ENCODE measurements at regions of chr1 and their contacts with region 1.

Region 1: DNA sequence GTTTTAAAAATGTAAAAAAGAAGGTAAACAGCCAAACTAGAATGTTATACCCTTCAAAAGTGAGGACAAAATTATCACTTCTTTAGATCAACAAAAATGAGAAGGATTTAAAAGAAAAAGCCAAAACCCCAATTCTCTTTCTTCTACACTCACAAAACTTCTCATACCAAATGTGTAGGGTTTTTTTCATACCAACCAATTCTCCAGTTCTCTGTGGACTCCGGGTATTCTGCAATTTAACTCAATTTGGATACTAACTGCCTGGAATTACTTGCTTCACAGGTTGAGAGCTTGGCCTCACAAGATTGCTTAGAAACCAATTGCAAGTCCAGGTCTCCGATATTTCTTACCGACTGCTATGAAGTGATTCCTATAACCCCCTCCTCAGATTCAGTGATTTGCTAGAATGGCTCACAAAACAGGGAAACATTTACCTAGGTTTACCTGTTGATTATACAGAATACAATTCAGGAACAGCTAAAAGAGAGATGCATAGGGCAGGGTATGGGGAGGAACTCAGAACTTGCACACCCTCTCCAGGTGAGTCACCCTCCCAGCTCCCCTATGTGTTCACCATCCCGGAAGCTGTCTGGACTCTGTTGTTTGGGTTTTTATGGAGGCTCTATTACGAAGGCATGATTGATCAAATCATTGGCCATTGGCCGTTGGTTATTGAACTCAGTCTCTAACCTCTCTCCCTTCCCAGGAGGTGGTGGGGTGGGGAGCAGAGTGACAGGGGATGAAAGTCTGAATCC is 67.1 kb downstream of the CAMTA1 start:
- DNase-seq: no peak
- ATAC-seq: no peak
- H3K4me3 ChIP-seq: no peak overlapping the region
- H3K4me3 Mint-ChIP-seq: no peak overlapping the region
- H3K27ac ChIP-seq: no peak overlapping the region
- H3K27ac Mint-ChIP-seq: no peak overlapping the region
- H3K4me1 ChIP-seq: no peaks in the 10 kb centered on the region
- H3K4me1 Mint-ChIP-seq: peaks cover 7 to 30% (median 12%) of the 10 kb centered on the region in 3 donors
- H3K27me3 ChIP-seq: no peaks in the 10 kb centered on the region
- H3K27me3 Mint-ChIP-seq: no peaks in the 10 kb centered on the region

Region 2: DNA sequence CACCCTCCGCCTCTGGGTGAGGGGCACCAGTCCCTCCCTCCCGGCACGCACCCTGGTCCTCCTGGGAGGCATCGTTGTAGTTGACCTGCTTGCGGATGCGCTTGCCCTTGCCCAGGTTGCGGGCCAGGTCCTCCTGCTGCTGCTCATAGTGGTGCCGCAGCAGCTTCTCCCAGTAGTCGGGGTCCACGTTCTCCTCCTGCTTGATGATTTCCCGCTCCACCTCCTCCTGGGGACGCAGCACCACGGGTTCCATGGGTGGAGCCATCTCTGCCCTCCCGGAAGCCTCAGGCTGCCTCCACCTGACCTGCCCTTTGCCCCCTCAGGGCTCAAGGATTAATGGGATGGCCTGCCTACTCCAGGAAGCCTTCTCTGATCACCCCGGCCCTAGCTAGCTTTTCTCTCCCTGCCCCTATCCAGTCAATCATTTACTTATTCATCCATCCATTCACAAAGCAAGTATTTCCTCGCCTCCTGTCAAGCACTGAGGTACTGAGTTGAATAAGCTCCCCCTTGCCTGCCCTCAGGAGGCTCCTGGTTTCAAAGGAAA is 725.7 kb before region 1 on chr1:
- CTCF ChIA-PET with region 1: interaction called in 1 of 2 experiments, 10 read pairs
- POLR2A ChIA-PET with region 1: no interaction called
- DNase-seq: no peak
- ATAC-seq: no peak
- H3K4me3 ChIP-seq: no peak overlapping the region
- H3K4me3 Mint-ChIP-seq: no peak overlapping the region
- H3K27ac ChIP-seq: no peak overlapping the region
- H3K27ac Mint-ChIP-seq: no peak overlapping the region
- H3K4me1 ChIP-seq: peaks cover 0 to 6% of the 10 kb centered on the region in 2 experiments
- H3K4me1 Mint-ChIP-seq: peaks cover 0 to 5% (median 3%) of the 10 kb centered on the region in 3 donors
- H3K27me3 ChIP-seq: peaks cover 0 to 40% of the 10 kb centered on the region in 2 experiments
- H3K27me3 Mint-ChIP-seq: peaks cover 1 to 9% of the 10 kb centered on the region in 2 donors

Region 3: GRCh38 chr1:6675941-6676340 is 176.4 kb before region 1 on chr1:
- CTCF ChIA-PET with region 1: no interaction called
- POLR2A ChIA-PET with region 1: no interaction called
- DNase-seq: no peak
- ATAC-seq: no peak
- H3K4me3 ChIP-seq: no peak overlapping the region
- H3K4me3 Mint-ChIP-seq: no peak overlapping the region
- H3K27ac ChIP-seq: no peak overlapping the region
- H3K27ac Mint-ChIP-seq: no peak overlapping the region
- H3K4me1 ChIP-seq: no peaks in the 10 kb centered on the region
- H3K4me1 Mint-ChIP-seq: no peaks in the 10 kb centered on the region
- H3K27me3 ChIP-seq: no peaks in the 10 kb centered on the region
- H3K27me3 Mint-ChIP-seq: no peaks in the 10 kb centered on the region

Region 4: GRCh38 chr1:6906783-6907182 is 54.5 kb after region 1 on chr1:
- CTCF ChIA-PET with region 1: no interaction called
- POLR2A ChIA-PET with region 1: no interaction called
- DNase-seq: no peak
- ATAC-seq: no peak
- H3K4me3 ChIP-seq: no peak overlapping the region
- H3K4me3 Mint-ChIP-seq: no peak overlapping the region
- H3K27ac ChIP-seq: no peak overlapping the region
- H3K27ac Mint-ChIP-seq: no peak overlapping the region
- H3K4me1 ChIP-seq: peaks cover 0 to 9% of the 10 kb centered on the region in 2 experiments
- H3K4me1 Mint-ChIP-seq: peaks cover 5 to 10% (median 6%) of the 10 kb centered on the region in 3 donors
- H3K27me3 ChIP-seq: peaks cover 0 to 37% of the 10 kb centered on the region in 2 experiments
- H3K27me3 Mint-ChIP-seq: peaks cover 7% of the 10 kb centered on the region in 2 donors

Measured in T-cell (primary cell).